ENCODE measurements at regions of chr10 and their contacts with region 1.

Region 1: GRCh38 chr10:93816123-93816747 is 58.5 kb downstream of the LGI1 start:
- DNase-seq: peak; percentile 73
- H3K4me3 Mint-ChIP-seq: peak overlapping the region; percentile 5
- H3K27ac Mint-ChIP-seq: no peak overlapping the region
- H3K4me1 Mint-ChIP-seq: peaks cover 19% of the 10 kb centered on the region
- H3K27me3 Mint-ChIP-seq: peaks cover 23% of the 10 kb centered on the region
- CTCF ChIP-seq: peak; percentile 69

Region 2: GRCh38 chr10:92263396-92263795 is 1552.8 kb before region 1 on chr10:
- CTCF ChIA-PET with region 1: no interaction called
- POLR2A ChIA-PET with region 1: no interaction called
- intact Hi-C with region 1: no loop called
- DNase-seq: no peak
- H3K4me3 Mint-ChIP-seq: no peak overlapping the region
- H3K27ac Mint-ChIP-seq: no peak overlapping the region
- H3K4me1 Mint-ChIP-seq: no peaks in the 10 kb centered on the region
- H3K27me3 Mint-ChIP-seq: no peaks in the 10 kb centered on the region
- CTCF ChIP-seq: no peak

Region 3: GRCh38 chr10:93541402-93542357 is 274.6 kb before region 1 on chr10:
- CTCF ChIA-PET with region 1: no interaction called
- POLR2A ChIA-PET with region 1: no interaction called
- intact Hi-C with region 1: loop called (anchors 1 kb)
- DNase-seq: peak; percentile 55
- H3K4me3 Mint-ChIP-seq: no peak overlapping the region
- H3K27ac Mint-ChIP-seq: no peak overlapping the region
- H3K4me1 Mint-ChIP-seq: no peaks in the 10 kb centered on the region
- H3K27me3 Mint-ChIP-seq: peaks cover 31% of the 10 kb centered on the region
- CTCF ChIP-seq: peak; percentile 78

Region 4: GRCh38 chr10:93702211-93703001 is 113.8 kb before region 1 on chr10 and contains the start of gene FRA10AC1:
- CTCF ChIA-PET with region 1: interaction called, 83 read pairs
- POLR2A ChIA-PET with region 1: interaction called, 44 read pairs
- intact Hi-C with region 1: loop called (anchors 1 kb)
- DNase-seq: peak; percentile 90
- H3K4me3 Mint-ChIP-seq: no peak within 1 kb of the TSS
- H3K27ac Mint-ChIP-seq: no peak within 1 kb of the TSS
- H3K4me1 Mint-ChIP-seq: peaks cover 8% of the 10 kb centered on the region
- H3K27me3 Mint-ChIP-seq: no peaks in the 10 kb centered on the region
- CTCF ChIP-seq: peak; percentile 71
- total RNA-seq, gene FRA10AC1: 19.3 and 25.1 TPM in 2 replicates

Region 5: DNA sequence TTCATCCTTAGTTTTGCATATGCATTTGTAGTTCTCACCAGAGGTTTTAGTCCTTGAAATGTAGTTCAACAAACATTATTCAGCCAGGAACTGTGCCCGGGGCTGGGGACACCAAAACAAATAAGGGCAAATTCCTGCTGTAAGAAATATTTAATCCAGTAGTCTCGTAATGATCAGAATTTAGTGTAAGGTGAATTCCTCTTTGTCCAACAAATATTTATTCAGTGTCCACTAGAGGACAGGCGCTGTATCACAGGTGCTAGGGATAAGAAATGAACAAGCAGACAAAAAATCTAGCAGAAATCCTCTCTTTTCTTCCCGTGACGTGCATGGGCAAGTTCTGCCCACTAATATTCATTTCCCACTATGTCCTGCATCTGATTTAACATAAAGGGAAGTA is 40.9 kb before region 1 on chr10:
- CTCF ChIA-PET with region 1: interaction called, 12 read pairs
- POLR2A ChIA-PET with region 1: no interaction called
- intact Hi-C with region 1: no loop called
- DNase-seq: no peak
- H3K4me3 Mint-ChIP-seq: no peak overlapping the region
- H3K27ac Mint-ChIP-seq: no peak overlapping the region
- H3K4me1 Mint-ChIP-seq: no peaks in the 10 kb centered on the region
- H3K27me3 Mint-ChIP-seq: no peaks in the 10 kb centered on the region
- CTCF ChIP-seq: no peak

Region 6: DNA sequence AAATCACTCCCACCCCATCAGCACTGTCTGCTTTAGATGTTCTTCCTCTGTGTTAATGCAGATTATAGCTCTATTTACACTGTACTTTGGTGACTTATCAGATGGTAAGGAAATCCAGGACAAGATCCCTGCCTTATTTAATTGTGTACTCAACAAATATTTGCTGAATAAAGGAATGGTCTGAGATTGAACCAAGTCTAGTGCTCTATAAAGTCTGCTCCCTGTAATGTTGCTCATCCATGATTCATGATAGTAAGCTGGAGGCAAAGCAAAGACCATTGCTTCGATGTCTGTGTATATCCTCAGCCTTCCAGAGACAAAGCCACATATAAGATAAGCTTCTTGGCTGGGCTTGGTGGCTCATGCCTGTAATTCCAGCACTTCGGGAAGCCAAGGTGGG is 211.0 kb after region 1 on chr10:
- CTCF ChIA-PET with region 1: no interaction called
- POLR2A ChIA-PET with region 1: no interaction called
- intact Hi-C with region 1: no loop called
- DNase-seq: no peak
- H3K4me3 Mint-ChIP-seq: no peak overlapping the region
- H3K27ac Mint-ChIP-seq: no peak overlapping the region
- H3K4me1 Mint-ChIP-seq: peaks cover 6% of the 10 kb centered on the region
- H3K27me3 Mint-ChIP-seq: no peaks in the 10 kb centered on the region
- CTCF ChIP-seq: no peak

Region 7: DNA sequence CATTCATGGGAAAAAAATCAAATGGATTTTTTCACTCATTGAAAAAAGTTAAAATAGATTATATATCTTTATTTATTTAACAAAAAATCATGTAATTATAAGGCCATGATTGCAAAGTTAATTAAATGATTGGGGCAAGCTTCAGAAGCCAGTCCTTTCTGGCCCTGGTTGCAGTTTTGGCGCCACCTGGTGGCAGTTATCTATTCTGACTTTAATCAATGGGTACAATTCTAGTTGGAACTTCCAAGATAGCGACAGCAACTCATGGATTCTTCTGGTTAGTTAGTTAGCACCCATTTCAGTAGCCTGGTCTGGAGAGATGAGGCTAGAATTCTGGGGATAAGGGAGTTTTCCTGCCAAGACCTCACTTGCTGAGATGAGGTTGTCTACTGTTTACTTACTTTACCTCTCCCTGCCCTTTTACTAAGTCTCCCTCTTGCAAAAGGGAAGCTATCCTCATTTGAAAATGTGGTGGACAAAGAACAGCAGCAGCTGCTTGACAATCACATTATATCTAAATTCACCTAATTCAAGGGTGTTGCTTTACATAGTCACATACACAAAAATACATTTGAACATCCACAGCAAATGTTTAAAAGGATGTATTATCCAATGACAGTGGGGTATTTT is 504.2 kb after region 1 on chr10:
- CTCF ChIA-PET with region 1: interaction called, 5 read pairs
- POLR2A ChIA-PET with region 1: no interaction called
- intact Hi-C with region 1: loop called (anchors 1 kb)
- DNase-seq: peak; percentile 76
- H3K4me3 Mint-ChIP-seq: no peak overlapping the region
- H3K27ac Mint-ChIP-seq: no peak overlapping the region
- H3K4me1 Mint-ChIP-seq: no peaks in the 10 kb centered on the region
- H3K27me3 Mint-ChIP-seq: no peaks in the 10 kb centered on the region
- CTCF ChIP-seq: peak; percentile 79